Motor neuron (in vitro differentiated cells): ENCODE measurements at regions of chr16 and their contacts with region 1.

Region 1: GRCh38 chr16:81585785-81586184 is 141.2 kb downstream of the CMIP start:
- ATAC-seq: no peak
- H3K4me3 ChIP-seq: no peak overlapping the region
- H3K27ac ChIP-seq: no peak overlapping the region
- H3K4me1 ChIP-seq: peaks cover 17 to 19% of the 10 kb centered on the region in 2 donors

Region 2: DNA sequence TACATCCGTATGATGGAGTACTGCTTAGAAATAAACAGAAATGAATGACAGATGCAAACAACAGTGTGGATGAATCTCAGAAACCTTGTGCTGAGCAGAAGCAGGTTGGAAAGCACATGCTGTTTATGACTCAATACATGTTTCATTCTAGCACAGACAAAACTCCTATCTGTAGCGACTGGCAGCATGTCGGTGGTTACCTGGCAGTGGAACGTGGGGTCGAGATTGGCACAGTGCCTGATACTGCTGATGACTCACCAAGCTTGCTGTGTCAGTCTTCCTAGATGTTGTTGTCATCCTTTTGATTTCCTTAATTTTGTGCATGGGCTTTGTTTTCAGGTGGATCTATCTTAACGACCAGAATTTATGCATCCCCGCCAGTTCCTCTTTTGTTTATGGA is 208.9 kb before region 1 on chr16:
- in situ Hi-C with region 1: no loop called
- ATAC-seq: no peak
- H3K4me3 ChIP-seq: no peak overlapping the region
- H3K27ac ChIP-seq: no peak overlapping the region
- H3K4me1 ChIP-seq: no peaks in the 10 kb centered on the region

Region 3: DNA sequence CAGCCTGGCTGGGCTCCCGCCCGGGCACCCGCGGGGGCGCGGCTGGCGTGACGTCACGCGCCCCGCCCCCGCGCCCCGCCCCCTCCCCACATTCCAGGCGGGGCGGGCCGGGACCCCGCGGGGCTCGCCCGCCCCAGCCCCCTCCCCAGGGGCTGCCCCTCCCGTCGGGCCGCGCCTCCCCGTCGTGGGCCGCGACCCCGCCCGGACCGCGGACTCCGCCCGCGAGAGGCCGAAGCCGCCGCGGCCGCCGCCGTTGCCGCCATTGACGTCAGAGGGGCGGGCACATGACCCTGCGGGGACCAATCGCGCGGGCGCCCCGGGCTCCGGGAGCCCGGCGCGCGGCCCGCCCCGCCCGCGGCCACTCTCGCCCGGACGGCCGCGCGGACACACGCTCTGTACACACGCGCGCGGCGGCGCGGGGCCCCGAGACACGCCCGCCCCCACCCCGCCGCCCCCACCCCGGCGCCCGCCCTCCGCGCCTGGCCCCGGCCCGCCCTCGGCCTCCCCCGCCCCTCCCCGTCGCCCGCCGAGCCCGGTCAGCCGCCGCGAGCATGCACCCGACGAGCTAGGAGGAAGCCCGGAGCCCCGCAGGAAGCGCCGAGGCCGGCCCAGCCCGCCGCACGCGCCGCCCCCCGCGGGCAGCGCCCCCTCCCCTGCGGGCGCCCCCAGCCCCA is 141.2 kb before region 1 on chr16 and contains the start of gene CMIP:
- in situ Hi-C with region 1: loop called in 1 of 9 experiments (anchors 25 kb)
- ATAC-seq: peak; percentile 76 to 85 (median 81)
- H3K4me3 ChIP-seq: peak within 1 kb of the TSS; percentile 46 to 86 (median 79)
- H3K27ac ChIP-seq: peak within 1 kb of the TSS; percentile 54 to 72
- H3K4me1 ChIP-seq: peaks cover 31 to 33% of the 10 kb centered on the region in 2 donors
- total RNA-seq, gene CMIP: 4.6 to 35.3 (median 19.1) TPM

Region 4: DNA sequence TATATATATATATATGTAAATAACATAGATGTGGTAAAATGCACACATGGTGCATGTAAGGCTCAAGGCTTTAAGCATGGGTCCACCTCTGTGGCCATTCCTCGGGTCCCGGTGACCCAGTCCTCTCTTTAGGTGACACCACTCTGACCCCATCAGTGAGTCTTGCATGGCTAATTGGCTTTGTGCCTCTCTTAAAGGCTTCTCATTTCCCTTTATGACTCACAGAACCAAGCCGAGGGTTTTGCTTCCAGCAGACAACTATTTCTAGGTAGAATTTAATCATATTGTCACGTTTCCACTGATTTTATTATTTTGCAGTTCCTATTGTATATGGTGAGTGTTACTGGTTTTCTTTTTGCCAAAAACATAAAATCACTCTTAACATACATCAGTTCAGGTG is 253.0 kb after region 1 on chr16:
- in situ Hi-C with region 1: no loop called
- ATAC-seq: peak in 3 of 8 experiments; percentile 56 to 71 (median 63)
- H3K4me3 ChIP-seq: no peak overlapping the region
- H3K27ac ChIP-seq: no peak overlapping the region
- H3K4me1 ChIP-seq: no peaks in the 10 kb centered on the region